ENCODE measurements at regions of chr10 and their contacts with region 1.

Region 1: GRCh38 chr10:62050893-62051433 is 149.5 kb downstream of the ARID5B start:
- DNase-seq: no peak
- ATAC-seq: peak; percentile 60
- H3K4me3 Mint-ChIP-seq: peak overlapping the region; percentile 85
- H3K27ac Mint-ChIP-seq: peak overlapping the region; percentile 93
- H3K4me1 Mint-ChIP-seq: peaks cover 100% of the 10 kb centered on the region
- H3K27me3 Mint-ChIP-seq: no peaks in the 10 kb centered on the region
- CTCF ChIP-seq: no peak

Region 2: DNA sequence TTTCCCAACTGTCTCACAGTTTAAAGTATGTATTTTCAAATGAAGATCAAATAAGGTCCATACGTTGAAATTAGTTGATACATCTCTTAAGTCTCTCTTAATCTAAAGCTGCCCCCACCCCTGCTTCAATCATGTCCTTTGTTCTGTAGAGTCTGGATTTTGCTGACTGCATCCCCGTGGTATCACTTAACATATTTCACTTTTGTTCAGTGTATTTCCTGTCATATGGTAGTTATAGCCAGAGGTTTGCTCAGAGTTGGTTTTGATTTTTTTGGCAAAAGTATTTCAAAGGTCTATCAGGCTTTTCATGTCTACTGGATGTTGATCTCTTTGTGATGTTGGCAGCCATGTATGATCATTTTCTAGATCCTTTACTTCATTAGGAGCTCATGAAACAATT is 203.9 kb before region 1 on chr10:
- CTCF ChIA-PET with region 1: no interaction called
- POLR2A ChIA-PET with region 1: no interaction called
- intact Hi-C with region 1: no loop called
- DNase-seq: no peak
- ATAC-seq: no peak
- H3K4me3 Mint-ChIP-seq: no peak overlapping the region
- H3K27ac Mint-ChIP-seq: no peak overlapping the region
- H3K4me1 Mint-ChIP-seq: peaks cover 5% of the 10 kb centered on the region
- H3K27me3 Mint-ChIP-seq: no peaks in the 10 kb centered on the region
- CTCF ChIP-seq: no peak

Region 3: DNA sequence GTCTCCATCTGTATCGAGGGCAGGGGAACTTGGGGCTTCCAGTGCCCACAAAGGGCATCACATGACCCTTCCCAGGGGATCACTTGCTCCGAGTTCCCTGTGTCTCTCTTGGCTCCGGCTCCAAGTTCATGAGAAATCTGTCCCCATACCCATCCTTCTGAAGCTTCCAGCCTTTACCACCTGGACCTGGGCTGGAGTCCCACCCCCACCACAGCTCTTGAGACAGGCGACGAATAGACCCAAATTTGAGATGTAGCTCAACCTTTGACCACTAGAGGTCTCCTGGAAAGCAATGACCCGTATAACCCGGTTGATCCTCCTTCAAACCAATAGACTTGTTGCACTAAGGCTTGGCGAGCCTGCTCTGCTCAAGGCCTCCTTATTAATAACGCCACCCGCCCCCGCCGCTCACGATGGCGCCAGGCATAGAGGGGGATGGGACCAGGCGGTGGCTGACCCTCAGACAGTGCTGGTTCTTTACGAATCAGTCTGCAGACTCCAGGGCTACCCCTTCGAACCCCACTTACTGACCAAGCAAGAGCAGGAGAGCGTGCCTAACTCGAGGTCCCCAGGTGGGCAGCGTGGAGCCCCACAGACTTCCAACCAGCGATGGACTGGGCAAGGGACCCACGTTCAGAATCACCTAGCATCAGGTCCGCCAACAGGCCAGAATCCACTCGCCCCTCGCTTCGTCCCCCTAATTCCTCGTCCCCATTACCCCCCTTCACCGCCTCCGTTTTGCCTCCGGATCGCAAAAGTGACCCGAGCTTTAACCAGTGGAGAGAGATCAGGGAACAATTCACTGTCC is 153.9 kb before region 1 on chr10:
- CTCF ChIA-PET with region 1: interaction called, 13 read pairs
- POLR2A ChIA-PET with region 1: interaction called, 589 read pairs
- intact Hi-C with region 1: no loop called
- DNase-seq: peak; percentile 43
- ATAC-seq: peak; percentile 71
- H3K4me3 Mint-ChIP-seq: peak overlapping the region; percentile 97
- H3K27ac Mint-ChIP-seq: peak overlapping the region; percentile 98
- H3K4me1 Mint-ChIP-seq: peaks cover 37% of the 10 kb centered on the region
- H3K27me3 Mint-ChIP-seq: no peaks in the 10 kb centered on the region
- CTCF ChIP-seq: no peak

Region 4: DNA sequence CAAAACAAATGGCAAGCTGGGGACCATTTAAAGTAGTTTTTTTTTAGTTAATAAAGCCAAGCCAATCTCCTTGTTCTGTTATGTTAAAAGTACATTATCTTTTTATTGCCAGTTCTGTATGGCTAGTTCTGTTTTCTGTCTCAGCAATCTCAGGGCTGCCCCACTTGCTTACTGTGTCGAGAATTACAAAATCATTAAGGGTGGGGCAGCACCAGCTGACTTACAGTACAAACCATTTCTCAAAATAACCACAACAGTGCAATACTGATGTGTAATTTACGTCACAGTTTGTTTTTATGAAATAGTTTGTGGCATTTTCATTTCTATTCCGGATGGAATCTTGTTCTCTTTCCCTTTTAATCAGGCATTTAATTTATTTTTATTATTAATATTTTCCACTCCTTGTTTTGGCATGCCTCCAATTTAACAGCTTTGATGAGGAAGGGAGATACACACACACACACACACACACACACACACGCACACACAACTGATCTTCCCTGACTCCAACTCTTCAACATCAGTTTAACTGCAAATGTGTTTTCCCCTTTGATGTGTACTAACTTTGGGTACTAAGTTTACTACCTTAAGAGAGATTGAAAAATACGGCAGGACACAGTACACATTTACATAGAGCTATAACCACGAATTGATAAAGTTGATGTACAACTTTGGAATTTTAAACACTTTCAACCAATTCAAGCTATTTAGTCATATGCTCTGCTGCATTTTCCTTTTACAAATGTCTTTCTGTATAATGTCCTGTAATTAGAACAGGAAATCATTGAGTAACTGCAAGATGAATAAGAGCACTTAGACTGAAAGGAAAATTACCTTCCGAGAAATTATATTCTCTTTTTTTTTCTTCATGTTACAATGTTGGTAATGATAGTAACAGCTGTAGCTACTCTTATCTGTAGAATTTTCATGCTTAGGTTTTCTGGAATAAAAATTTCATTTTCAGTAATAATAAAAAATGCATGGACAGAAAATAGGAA is 58.0 kb before region 1 on chr10:
- CTCF ChIA-PET with region 1: interaction called, 4 read pairs
- POLR2A ChIA-PET with region 1: interaction called, 70 read pairs
- intact Hi-C with region 1: loop called (anchors 1 kb)
- DNase-seq: no peak
- ATAC-seq: peak; percentile 59
- H3K4me3 Mint-ChIP-seq: peak overlapping the region; percentile 62
- H3K27ac Mint-ChIP-seq: peak overlapping the region; percentile 89
- H3K4me1 Mint-ChIP-seq: peaks cover 90% of the 10 kb centered on the region
- H3K27me3 Mint-ChIP-seq: no peaks in the 10 kb centered on the region
- CTCF ChIP-seq: no peak

Region 5: GRCh38 chr10:62063795-62064472 is 13.0 kb after region 1 on chr10:
- CTCF ChIA-PET with region 1: no interaction called
- POLR2A ChIA-PET with region 1: interaction called, 14 read pairs
- intact Hi-C with region 1: no loop called
- DNase-seq: no peak
- ATAC-seq: no peak
- H3K4me3 Mint-ChIP-seq: no peak overlapping the region
- H3K27ac Mint-ChIP-seq: peak overlapping the region; percentile 35
- H3K4me1 Mint-ChIP-seq: peaks cover 58% of the 10 kb centered on the region
- H3K27me3 Mint-ChIP-seq: no peaks in the 10 kb centered on the region
- CTCF ChIP-seq: no peak

Region 6: DNA sequence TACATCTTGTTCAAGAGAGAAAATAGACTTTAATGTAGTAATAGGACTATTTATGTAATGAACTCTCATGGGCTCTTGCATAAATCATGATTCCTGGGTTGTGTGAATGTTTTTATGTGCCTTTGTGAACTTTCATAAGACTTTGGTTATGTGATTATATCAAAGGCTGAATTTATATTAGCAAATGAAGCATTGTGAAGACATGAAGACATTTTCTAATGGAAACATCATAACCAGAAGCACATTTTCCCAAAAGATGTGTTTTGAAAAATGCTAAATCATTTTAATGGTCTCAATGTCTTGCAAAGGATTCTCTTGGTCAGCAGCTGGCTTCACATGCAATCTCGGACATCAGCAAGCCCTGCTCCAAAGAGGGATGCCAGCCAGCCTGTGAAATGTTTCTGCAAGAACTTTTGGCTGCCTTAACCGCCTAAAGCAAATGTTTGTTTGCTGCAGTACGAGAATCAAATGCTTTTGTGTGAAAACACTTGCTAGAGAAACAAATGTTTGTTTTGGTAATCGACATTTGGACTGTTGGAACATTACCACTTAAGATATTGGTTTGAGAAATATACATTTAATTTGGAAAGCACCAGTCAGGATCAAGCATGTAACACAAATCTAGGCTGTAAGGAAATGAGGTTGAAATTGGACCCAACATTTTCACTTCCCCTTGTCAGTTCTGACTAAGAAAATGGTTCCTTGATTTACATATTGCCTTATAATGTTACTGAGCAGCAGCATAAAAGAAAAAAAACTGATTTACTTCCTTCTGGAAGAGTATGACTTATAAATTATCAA is 115.6 kb after region 1 on chr10:
- CTCF ChIA-PET with region 1: no interaction called
- POLR2A ChIA-PET with region 1: no interaction called
- intact Hi-C with region 1: loop called (anchors 2 kb)
- DNase-seq: no peak
- ATAC-seq: peak; percentile 96
- H3K4me3 Mint-ChIP-seq: peak overlapping the region; percentile 16
- H3K27ac Mint-ChIP-seq: peak overlapping the region; percentile 80
- H3K4me1 Mint-ChIP-seq: peaks cover 38% of the 10 kb centered on the region
- H3K27me3 Mint-ChIP-seq: no peaks in the 10 kb centered on the region
- CTCF ChIP-seq: no peak

Region 7: GRCh38 chr10:62528441-62528840 is 477.5 kb after region 1 on chr10:
- CTCF ChIA-PET with region 1: no interaction called
- POLR2A ChIA-PET with region 1: interaction called, 3 read pairs
- intact Hi-C with region 1: loop called (anchors 10 kb)
- DNase-seq: no peak
- ATAC-seq: peak; percentile 59
- H3K4me3 Mint-ChIP-seq: peak overlapping the region; percentile 64
- H3K27ac Mint-ChIP-seq: peak overlapping the region; percentile 92
- H3K4me1 Mint-ChIP-seq: peaks cover 58% of the 10 kb centered on the region
- H3K27me3 Mint-ChIP-seq: no peaks in the 10 kb centered on the region
- CTCF ChIP-seq: no peak

Region 8: GRCh38 chr10:62610649-62611229 is 559.8 kb after region 1 on chr10:
- CTCF ChIA-PET with region 1: no interaction called
- POLR2A ChIA-PET with region 1: no interaction called
- intact Hi-C with region 1: no loop called
- DNase-seq: peak; percentile 37
- ATAC-seq: peak; percentile 95
- H3K4me3 Mint-ChIP-seq: no peak overlapping the region
- H3K27ac Mint-ChIP-seq: peak overlapping the region; percentile 30
- H3K4me1 Mint-ChIP-seq: peaks cover 15% of the 10 kb centered on the region
- H3K27me3 Mint-ChIP-seq: no peaks in the 10 kb centered on the region
- CTCF ChIP-seq: peak; percentile 38